GM13977 (cell line): ENCODE measurements at regions of chr2 and their contacts with region 1.

Region 1: DNA sequence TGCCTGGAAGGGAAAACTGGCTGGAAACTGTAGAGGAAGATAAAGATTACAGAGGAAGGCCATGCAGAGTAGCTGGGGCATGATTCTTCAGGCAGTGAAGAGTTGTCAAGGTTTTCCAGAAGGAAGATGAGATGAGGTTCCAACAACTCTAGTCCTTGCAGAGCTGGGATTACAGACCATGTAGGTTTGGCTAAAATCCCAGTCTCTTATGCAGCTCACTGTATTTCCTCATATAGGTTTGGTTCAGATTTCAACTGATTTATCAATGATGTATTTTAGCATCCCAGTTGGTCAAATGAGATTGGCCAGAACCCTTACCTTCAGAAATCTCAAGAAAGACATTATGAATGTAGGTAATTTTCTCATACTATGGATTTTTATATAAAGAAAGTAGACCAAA is 16.4 kb downstream of the FAP start:
- DNase-seq: no peak
- CTCF ChIP-seq: no peak

Region 2: GRCh38 chr2:161992526-161992925 is 234.3 kb before region 1 on chr2:
- in situ Hi-C with region 1: no loop called
- DNase-seq: no peak
- CTCF ChIP-seq: no peak

Region 3: GRCh38 chr2:162297925-162298552 is 71.2 kb after region 1 on chr2:
- in situ Hi-C with region 1: loop called (anchors 5 kb)
- DNase-seq: no peak
- CTCF ChIP-seq: peak; percentile 61

Region 4: GRCh38 chr2:162363361-162363760 is 136.5 kb after region 1 on chr2:
- in situ Hi-C with region 1: no loop called
- DNase-seq: no peak
- CTCF ChIP-seq: no peak

Region 5: DNA sequence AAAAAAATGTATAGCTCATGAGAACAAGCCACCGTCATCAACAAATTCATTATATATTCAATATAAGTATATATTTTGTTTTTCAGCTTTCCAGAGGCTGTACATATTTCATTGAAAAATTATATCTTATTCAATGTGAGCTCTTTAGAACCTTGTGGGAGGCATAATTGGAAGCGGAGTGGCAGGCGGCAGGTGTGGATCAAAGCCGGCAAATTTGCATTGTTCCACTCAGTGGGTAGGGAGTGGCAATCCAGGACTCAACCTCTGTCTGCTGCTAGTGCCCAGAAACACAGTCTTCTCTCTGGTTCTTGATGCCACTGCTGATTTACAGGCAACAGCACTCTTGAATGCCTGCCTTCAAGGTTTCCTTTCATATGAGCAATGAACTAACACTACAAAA is 164.0 kb after region 1 on chr2:
- in situ Hi-C with region 1: no loop called
- DNase-seq: no peak
- CTCF ChIP-seq: no peak